Heart right ventricle (tissue), 16 donors: ENCODE measurements at regions of chr4 and their contacts with region 1.

Region 1: GRCh38 chr4:90281541-90282355 is 154.6 kb downstream of the CCSER1 start:
- DNase-seq: no peak
- ATAC-seq: no peak
- H3K4me3 ChIP-seq: no peak overlapping the region
- H3K27ac ChIP-seq: no peak overlapping the region
- H3K4me1 ChIP-seq: no peaks in the 10 kb centered on the region
- H3K27me3 ChIP-seq: no peaks in the 10 kb centered on the region
- CTCF ChIP-seq: no peak

Region 2: GRCh38 chr4:90025248-90025647 is 256.5 kb before region 1 on chr4:
- intact Hi-C with region 1: loop called in 1 of 10 experiments (anchors 10 kb)
- DNase-seq: no peak
- ATAC-seq: no peak
- H3K4me3 ChIP-seq: no peak overlapping the region
- H3K27ac ChIP-seq: no peak overlapping the region
- H3K4me1 ChIP-seq: no peaks in the 10 kb centered on the region
- H3K27me3 ChIP-seq: no peaks in the 10 kb centered on the region
- CTCF ChIP-seq: peak in 4 of 9 donors; percentile 15 to 34 (median 22)